Heart left ventricle (tissue), 16 donors: ENCODE measurements at regions of chr7 and their contacts with region 1.

Region 1: GRCh38 chr7:132029369-132030085 is 473.1 kb upstream of the PODXL start:
- DNase-seq: no peak
- ATAC-seq: peak in 3 of 4 donors; percentile 32 to 50 (median 39)
- H3K4me3 ChIP-seq: no peak overlapping the region
- H3K27ac ChIP-seq: peak overlapping the region in 7 of 12 donors; percentile 6 to 75 (median 37)
- H3K4me1 ChIP-seq: peaks cover 0 to 19% (median 0%) of the 10 kb centered on the region in 12 donors
- H3K27me3 ChIP-seq: no peaks in the 10 kb centered on the region
- CTCF ChIP-seq: no peak
- POLR2A ChIP-seq: no peak

Region 2: DNA sequence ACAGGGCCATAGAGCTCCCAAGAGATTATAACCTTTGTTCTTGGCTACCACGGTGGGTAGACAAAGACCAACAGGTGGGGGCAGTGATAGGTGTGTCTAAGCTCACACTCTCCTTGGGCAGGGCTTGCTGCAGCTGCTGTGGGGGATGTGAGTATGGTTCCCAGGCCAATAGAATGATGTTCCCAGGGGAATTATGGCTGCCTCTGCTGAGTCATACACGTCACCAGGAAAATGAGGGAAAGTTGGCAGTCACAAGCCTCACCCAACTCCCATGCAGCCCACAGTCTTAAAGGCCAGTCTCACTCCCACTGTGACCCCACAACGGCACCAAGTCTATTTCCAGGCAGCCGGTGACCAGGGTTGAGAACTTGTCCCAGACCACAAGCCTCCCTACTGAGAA is 19.7 kb before region 1 on chr7:
- intact Hi-C with region 1: no loop called
- DNase-seq: no peak
- ATAC-seq: no peak
- H3K4me3 ChIP-seq: no peak overlapping the region
- H3K27ac ChIP-seq: no peak overlapping the region
- H3K4me1 ChIP-seq: peaks cover 0 to under 1% (median 0%) of the 10 kb centered on the region in 12 donors
- H3K27me3 ChIP-seq: no peaks in the 10 kb centered on the region
- CTCF ChIP-seq: no peak
- POLR2A ChIP-seq: no peak

Region 3: DNA sequence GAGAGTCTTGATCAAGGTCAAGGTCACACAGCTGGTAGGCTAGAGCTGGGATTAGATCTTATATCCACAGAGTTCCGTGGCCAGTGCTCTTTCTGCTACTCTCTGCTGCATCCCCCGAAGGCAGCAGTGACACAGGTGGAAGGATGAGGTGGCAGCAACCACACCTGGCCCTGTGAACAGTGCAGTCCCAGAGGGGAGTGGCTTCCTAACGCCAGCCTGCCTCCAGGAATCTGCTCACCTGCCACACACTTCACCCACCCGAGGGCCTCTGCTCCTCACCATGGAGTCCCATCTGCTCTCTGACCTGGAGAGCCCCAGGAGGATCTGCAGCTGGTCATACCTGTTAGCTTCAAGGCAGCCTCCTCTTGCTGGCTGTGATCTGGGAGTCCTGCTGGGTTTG is 62.6 kb after region 1 on chr7:
- intact Hi-C with region 1: no loop called
- DNase-seq: no peak
- ATAC-seq: no peak
- H3K4me3 ChIP-seq: no peak overlapping the region
- H3K27ac ChIP-seq: no peak overlapping the region
- H3K4me1 ChIP-seq: no peaks in the 10 kb centered on the region
- H3K27me3 ChIP-seq: no peaks in the 10 kb centered on the region
- CTCF ChIP-seq: no peak
- POLR2A ChIP-seq: no peak

Region 4: DNA sequence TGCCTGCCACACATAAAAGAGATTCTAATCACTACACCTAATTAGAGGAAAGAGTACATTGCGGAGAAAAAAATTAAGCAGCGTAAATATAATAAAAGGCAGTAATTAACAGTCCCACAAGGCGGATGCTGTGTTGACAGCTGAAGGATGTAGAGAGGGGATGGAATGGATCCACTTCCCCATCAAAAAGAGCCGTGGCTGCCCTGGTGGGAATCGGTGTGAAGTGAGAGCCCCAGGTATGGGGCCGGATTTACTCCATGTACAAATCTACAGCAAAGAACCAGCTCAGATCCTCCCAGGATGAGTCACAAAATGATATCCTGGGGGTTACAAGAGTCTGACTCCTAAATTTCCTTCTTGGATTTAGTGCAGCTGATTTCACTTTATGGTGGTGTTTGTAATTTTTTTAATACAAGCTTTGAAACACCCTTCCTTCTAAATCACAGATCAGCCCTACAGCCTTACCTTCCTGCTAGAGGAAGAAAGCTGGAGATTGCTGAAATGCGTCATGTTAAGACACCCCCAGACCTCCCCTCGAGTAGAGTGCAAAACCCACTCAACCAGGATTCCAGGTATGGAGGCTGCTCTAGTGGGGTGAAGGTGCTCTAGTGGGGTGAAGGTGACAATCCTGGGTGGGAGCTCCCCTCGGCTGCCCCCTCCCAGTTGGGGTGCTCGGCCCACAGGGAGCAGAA is 148.3 kb after region 1 on chr7:
- intact Hi-C with region 1: no loop called
- DNase-seq: no peak
- ATAC-seq: no peak
- H3K4me3 ChIP-seq: no peak overlapping the region
- H3K27ac ChIP-seq: no peak overlapping the region
- H3K4me1 ChIP-seq: no peaks in the 10 kb centered on the region
- H3K27me3 ChIP-seq: no peaks in the 10 kb centered on the region
- CTCF ChIP-seq: no peak
- POLR2A ChIP-seq: no peak

Region 5: DNA sequence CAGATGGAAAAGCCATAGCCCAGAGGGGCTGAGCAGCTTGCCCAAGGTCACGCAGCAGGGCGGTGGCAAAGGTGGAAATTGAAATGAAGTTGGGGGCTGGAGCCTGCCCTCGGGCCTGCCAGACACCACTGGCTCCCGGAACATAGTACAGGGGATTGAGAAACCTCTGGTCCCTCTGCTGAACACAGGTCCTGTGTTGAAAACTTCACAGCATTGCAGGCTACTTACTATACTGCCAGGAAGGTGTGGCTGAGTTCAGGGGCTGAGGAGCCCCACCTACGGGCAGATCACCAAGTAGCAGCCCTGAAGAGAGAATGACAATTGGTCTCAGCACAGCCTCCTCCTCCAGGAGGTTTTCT is 220.1 kb after region 1 on chr7:
- intact Hi-C with region 1: loop called in 1 of 10 experiments (anchors 10 kb)
- DNase-seq: no peak
- ATAC-seq: peak in 2 of 4 donors; percentile 61 to 62
- H3K4me3 ChIP-seq: no peak overlapping the region
- H3K27ac ChIP-seq: no peak overlapping the region
- H3K4me1 ChIP-seq: peaks cover 0 to 28% (median 10%) of the 10 kb centered on the region in 12 donors
- H3K27me3 ChIP-seq: no peaks in the 10 kb centered on the region
- CTCF ChIP-seq: peak in 8 of 12 donors; percentile 6 to 36 (median 24)
- POLR2A ChIP-seq: no peak